PC-3 (cell line): ENCODE measurements at regions of chr20 and their contacts with region 1.

Region 1: GRCh38 chr20:62778601-62779416 is 17.5 kb upstream of the MRGBP start:
- DNase-seq: no peak
- ATAC-seq: no peak
- H3K4me3 ChIP-seq: no peak overlapping the region
- H3K27ac ChIP-seq: no peak overlapping the region
- H3K4me1 ChIP-seq: peaks cover 5% of the 10 kb centered on the region; the same call in 1 of the 2 replicates
- H3K27me3 ChIP-seq: no peaks in the 10 kb centered on the region
- CTCF ChIP-seq: no peak

Region 2: GRCh38 chr20:62536871-62537401 is 241.9 kb before region 1 on chr20:
- CTCF ChIA-PET with region 1: no interaction called
- POLR2A ChIA-PET with region 1: no interaction called
- intact Hi-C with region 1: no loop called
- DNase-seq: no peak
- ATAC-seq: peak; percentile 27; the same call in 1 of the 2 replicates
- H3K4me3 ChIP-seq: no peak overlapping the region
- H3K27ac ChIP-seq: no peak overlapping the region
- H3K4me1 ChIP-seq: no peaks in the 10 kb centered on the region
- H3K27me3 ChIP-seq: no peaks in the 10 kb centered on the region
- CTCF ChIP-seq: no peak

Region 3: DNA sequence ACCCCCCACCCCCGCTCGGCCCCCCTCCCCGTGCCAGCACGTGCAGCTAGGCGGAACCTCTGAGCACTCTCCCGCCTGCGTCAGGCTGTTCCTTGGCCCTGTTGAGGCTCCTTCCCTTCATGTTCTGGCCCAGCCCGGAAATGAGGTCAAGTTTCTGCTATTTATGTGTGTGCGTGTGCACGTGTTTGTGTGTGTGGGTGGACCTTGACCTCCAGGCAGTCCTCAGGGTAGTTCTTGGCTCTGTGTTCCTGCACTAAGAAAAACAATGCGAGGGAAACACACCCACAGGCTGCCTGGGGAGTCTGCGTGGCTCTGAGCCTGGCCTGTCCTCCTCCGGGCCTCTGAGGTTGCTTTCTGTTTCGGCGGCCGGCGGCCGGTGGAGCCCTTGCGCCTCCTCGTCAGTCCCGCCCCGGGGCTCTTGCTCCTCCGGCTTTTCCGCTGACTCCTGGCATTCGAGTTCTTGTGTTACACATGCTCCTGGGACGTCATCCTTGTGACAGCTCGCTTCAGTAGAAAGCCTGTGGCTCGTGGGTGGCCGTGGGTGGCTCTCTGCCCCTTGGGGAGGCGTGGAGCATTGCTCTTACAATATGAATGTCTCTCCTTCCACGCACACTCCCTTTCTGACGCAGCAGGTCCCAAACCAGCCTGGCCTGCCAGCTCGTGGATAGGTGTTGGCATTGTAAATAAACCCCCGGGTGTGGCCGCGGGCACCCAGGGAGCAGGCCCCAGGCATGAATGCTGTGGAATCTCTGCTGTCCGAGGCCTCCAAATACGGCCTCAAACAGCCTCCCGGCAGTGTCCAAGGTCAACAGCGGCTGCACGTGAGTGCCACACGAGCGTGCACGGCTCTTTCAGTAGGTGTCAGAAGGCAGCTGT is 126.5 kb before region 1 on chr20:
- CTCF ChIA-PET with region 1: no interaction called
- POLR2A ChIA-PET with region 1: no interaction called
- intact Hi-C with region 1: no loop called
- DNase-seq: peak; percentile 84
- ATAC-seq: peak; percentile 60
- H3K4me3 ChIP-seq: peak overlapping the region; percentile 54
- H3K27ac ChIP-seq: peak overlapping the region; percentile 84
- H3K4me1 ChIP-seq: peaks cover 34% of the 10 kb centered on the region
- H3K27me3 ChIP-seq: no peaks in the 10 kb centered on the region
- CTCF ChIP-seq: no peak; the same call in 1 of the 2 replicates

Region 4: GRCh38 chr20:62764156-62764935 is 14.5 kb before region 1 on chr20:
- CTCF ChIA-PET with region 1: interaction called, 13 read pairs
- POLR2A ChIA-PET with region 1: no interaction called
- intact Hi-C with region 1: no loop called
- DNase-seq: no peak
- ATAC-seq: peak; percentile 57
- H3K4me3 ChIP-seq: no peak overlapping the region
- H3K27ac ChIP-seq: no peak overlapping the region
- H3K4me1 ChIP-seq: peaks cover 7% of the 10 kb centered on the region
- H3K27me3 ChIP-seq: 0 out of 2 replicates have a peak, but pooled peaks cover 4% of the 10 kb centered on the region
- CTCF ChIP-seq: no peak